ENCODE measurements at regions of chr1 and their contacts with region 1.

Region 1: GRCh38 chr1:36187800-36188593 is 32.0 kb downstream of the MAP7D1 start:
- DNase-seq: peak; percentile 67 to 89 (median 76)
- H3K4me3 ChIP-seq: no peak overlapping the region
- H3K4me3 Mint-ChIP-seq: no peak overlapping the region
- H3K27ac ChIP-seq: no peak overlapping the region
- H3K27ac Mint-ChIP-seq: peak overlapping the region; percentile 0 to 94 (median 86)
- H3K4me1 ChIP-seq: peaks cover 5% of the 10 kb centered on the region
- H3K4me1 Mint-ChIP-seq: peaks cover 8 to 15% (median 12%) of the 10 kb centered on the region in 3 donors
- H3K27me3 ChIP-seq: no peaks in the 10 kb centered on the region
- H3K27me3 Mint-ChIP-seq: peaks cover 0 to 1% of the 10 kb centered on the region in 2 donors

Region 2: GRCh38 chr1:36115200-36115669 is 72.8 kb before region 1 on chr1:
- CTCF ChIA-PET with region 1: no interaction called
- POLR2A ChIA-PET with region 1: no interaction called
- DNase-seq: no peak
- H3K4me3 ChIP-seq: no peak overlapping the region
- H3K4me3 Mint-ChIP-seq: no peak overlapping the region
- H3K27ac ChIP-seq: no peak overlapping the region
- H3K27ac Mint-ChIP-seq: no peak overlapping the region
- H3K4me1 ChIP-seq: no peaks in the 10 kb centered on the region
- H3K4me1 Mint-ChIP-seq: peaks cover 5 to 14% (median 6%) of the 10 kb centered on the region in 3 donors
- H3K27me3 ChIP-seq: no peaks in the 10 kb centered on the region
- H3K27me3 Mint-ChIP-seq: peaks cover 0 to 4% of the 10 kb centered on the region in 2 donors

Region 3: GRCh38 chr1:36134505-36135329 is 53.3 kb before region 1 on chr1:
- CTCF ChIA-PET with region 1: interaction called, 11 read pairs
- POLR2A ChIA-PET with region 1: no interaction called
- DNase-seq: no peak
- H3K4me3 ChIP-seq: no peak overlapping the region
- H3K4me3 Mint-ChIP-seq: no peak overlapping the region
- H3K27ac ChIP-seq: no peak overlapping the region
- H3K27ac Mint-ChIP-seq: peak overlapping the region in 2 of 8 donors; percentile 58 to 76
- H3K4me1 ChIP-seq: no peaks in the 10 kb centered on the region
- H3K4me1 Mint-ChIP-seq: peaks cover 0 to 8% (median 3%) of the 10 kb centered on the region in 3 donors
- H3K27me3 ChIP-seq: no peaks in the 10 kb centered on the region
- H3K27me3 Mint-ChIP-seq: no peaks in the 10 kb centered on the region

Region 4: GRCh38 chr1:36149237-36149972 is 38.6 kb before region 1 on chr1 and contains the start of gene TRAPPC3:
- CTCF ChIA-PET with region 1: interaction called, 190 read pairs
- POLR2A ChIA-PET with region 1: interaction called, 22 read pairs
- DNase-seq: peak; percentile 99 to 100 (median 99)
- H3K4me3 ChIP-seq: peak within 1 kb of the TSS; percentile 66
- H3K4me3 Mint-ChIP-seq: peak within 1 kb of the TSS; percentile 95 to 100 (median 99)
- H3K27ac ChIP-seq: peak within 1 kb of the TSS; percentile 87
- H3K27ac Mint-ChIP-seq: peak within 1 kb of the TSS; percentile 98 to 100 (median 99)
- H3K4me1 ChIP-seq: peaks cover 56% of the 10 kb centered on the region
- H3K4me1 Mint-ChIP-seq: peaks cover 65 to 81% (median 73%) of the 10 kb centered on the region in 3 donors
- H3K27me3 ChIP-seq: no peaks in the 10 kb centered on the region
- H3K27me3 Mint-ChIP-seq: peaks cover 0 to 1% of the 10 kb centered on the region in 2 donors
- total RNA-seq, gene TRAPPC3: 61.7 to 63.1 TPM

Region 5: GRCh38 chr1:36160949-36161485 is 27.0 kb before region 1 on chr1:
- CTCF ChIA-PET with region 1: interaction called, 113 read pairs
- POLR2A ChIA-PET with region 1: interaction called, 4 read pairs
- DNase-seq: peak; percentile 45 to 77 (median 66)
- H3K4me3 ChIP-seq: peak overlapping the region; percentile 78
- H3K4me3 Mint-ChIP-seq: peak overlapping the region; percentile 81 to 90 (median 85)
- H3K27ac ChIP-seq: peak overlapping the region; percentile 87
- H3K27ac Mint-ChIP-seq: peak overlapping the region; percentile 90 to 99 (median 95)
- H3K4me1 ChIP-seq: peaks cover 75% of the 10 kb centered on the region
- H3K4me1 Mint-ChIP-seq: peaks cover 74 to 79% (median 78%) of the 10 kb centered on the region in 3 donors
- H3K27me3 ChIP-seq: no peaks in the 10 kb centered on the region
- H3K27me3 Mint-ChIP-seq: no peaks in the 10 kb centered on the region

Region 6: DNA sequence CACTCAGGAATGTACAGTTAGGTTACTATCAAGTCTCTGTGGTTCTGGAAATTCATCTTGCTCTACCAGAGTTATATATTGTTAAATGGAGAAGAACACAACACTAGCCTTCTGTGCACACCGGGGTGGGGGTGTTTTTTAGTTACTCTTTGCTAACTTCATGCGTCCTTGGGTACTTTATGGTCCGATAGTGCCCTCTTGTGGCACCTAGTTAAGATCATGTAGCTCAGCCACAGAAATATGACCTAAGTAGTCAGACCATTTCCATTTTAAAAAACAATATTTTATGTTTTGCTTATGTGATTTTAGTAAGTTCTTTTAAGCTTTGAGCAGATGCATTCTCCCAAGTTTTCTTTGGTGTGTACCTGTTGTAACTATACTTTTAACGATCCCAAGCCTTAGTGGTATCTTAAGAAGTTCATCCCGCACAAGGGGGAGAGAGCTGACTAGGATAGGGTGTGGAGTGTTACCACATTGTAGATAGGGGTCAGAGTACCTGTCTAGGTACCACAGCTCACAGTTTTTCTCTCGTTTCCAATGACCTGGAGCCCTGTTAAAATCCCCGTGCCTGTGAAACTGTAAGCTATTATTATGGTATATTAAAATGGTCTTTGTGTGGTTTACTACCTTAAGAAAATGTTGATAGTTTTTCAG is 97.6 kb after region 1 on chr1:
- CTCF ChIA-PET with region 1: interaction called, 13 read pairs
- POLR2A ChIA-PET with region 1: interaction called, 5 read pairs
- DNase-seq: peak; percentile 49 to 76 (median 61)
- H3K4me3 ChIP-seq: no peak overlapping the region
- H3K4me3 Mint-ChIP-seq: no peak overlapping the region
- H3K27ac ChIP-seq: no peak overlapping the region
- H3K27ac Mint-ChIP-seq: peak overlapping the region in 7 of 8 donors; percentile 30 to 87 (median 72)
- H3K4me1 ChIP-seq: peaks cover 5% of the 10 kb centered on the region
- H3K4me1 Mint-ChIP-seq: peaks cover 14 to 24% (median 15%) of the 10 kb centered on the region in 3 donors
- H3K27me3 ChIP-seq: no peaks in the 10 kb centered on the region
- H3K27me3 Mint-ChIP-seq: no peaks in the 10 kb centered on the region